Activated CD4-positive, alpha-beta T cell treated with anti-CD3 and anti-CD28 coated beads, Interleukin-2, amount 10 ng/mL, durations not matched to agents 24 days and 14 days (primary cell): ENCODE measurements at regions of chr19 and their contacts with region 1.

Region 1: DNA sequence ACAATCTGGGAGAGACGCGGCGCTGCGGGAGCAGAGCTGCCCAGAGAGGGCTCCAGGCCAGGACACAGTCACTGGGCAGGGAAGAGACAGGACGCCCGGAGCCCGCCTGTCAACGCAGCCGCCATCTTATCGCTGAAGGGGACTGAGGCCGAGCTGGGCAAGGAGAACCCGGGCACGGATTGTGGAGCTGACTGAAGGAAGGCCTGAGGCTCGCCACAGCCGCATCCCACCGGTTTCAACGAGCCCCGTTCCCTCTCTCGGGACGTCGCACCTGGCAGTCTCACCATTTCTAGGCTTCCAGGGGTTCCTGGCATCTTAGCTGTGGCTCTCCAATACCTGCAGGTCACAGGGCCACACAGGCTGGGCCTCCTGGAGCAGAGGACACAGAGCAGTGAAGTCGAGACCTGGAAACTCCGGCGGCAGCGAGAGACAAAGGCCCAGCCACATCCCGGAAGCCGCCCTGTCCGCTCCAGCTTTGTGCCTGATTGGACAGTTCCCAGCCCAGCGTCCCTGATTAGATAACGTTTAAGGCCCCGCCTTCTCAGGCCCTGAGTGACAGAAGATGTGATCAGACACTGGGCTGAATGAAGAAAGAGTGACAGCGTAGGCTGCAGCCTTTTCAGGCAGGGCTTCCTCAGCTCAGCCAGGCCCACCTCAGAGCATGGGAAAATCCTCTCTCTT is at the start of gene ZNF91:
- DNase-seq: peak; percentile 96
- H3K4me3 Mint-ChIP-seq: peak within 1 kb of the TSS; percentile 97
- H3K27ac Mint-ChIP-seq: peak within 1 kb of the TSS; percentile 98
- H3K4me1 Mint-ChIP-seq: no peaks in the 10 kb centered on the region
- H3K27me3 Mint-ChIP-seq: no peaks in the 10 kb centered on the region
- total RNA-seq, gene ZNF91: 25.0 and 31.1 TPM in 2 replicates

Region 2: DNA sequence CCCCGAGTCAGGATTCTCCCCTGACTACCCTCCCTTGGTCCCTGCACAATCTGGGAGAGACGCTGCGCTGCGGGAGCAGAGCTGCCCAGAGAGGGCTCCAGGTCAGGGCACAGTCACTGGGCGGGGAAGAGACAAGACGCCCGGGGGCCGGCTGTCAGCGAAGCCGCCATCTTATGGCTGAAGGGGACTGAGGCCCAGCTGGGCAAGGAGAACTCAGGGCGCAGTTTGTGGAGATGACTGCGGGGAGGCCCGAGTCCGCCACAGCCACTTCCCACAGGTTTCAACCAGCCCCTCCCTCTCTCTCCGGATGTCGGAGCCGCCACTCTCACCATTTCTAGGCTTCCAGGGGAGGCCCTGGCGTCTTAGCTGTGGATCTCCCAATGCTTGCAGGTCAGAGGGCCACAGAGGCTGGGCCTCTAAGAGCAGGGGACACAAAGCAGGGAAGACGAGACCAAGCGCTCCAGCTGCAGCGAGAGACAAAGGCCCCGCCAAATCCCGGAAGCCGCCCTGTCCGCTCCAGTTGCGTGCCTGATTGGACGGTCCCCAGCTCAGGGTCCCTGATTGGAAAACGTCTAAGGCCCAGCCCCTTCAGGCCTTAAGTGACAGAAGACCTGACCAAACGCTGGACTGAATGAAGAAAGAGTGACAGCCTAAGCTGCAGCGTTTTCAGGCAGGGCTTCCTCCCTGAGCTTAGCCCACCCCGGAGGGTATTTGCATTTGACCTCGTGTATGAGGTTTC is 145.1 kb before region 1 on chr19 and contains the start of gene ZNF724:
- intact Hi-C with region 1: loop called (anchors 1 kb)
- DNase-seq: peak; percentile 96
- H3K4me3 Mint-ChIP-seq: peak within 1 kb of the TSS; percentile 98
- H3K27ac Mint-ChIP-seq: peak within 1 kb of the TSS; percentile 98
- H3K4me1 Mint-ChIP-seq: peaks cover 7% of the 10 kb centered on the region
- H3K27me3 Mint-ChIP-seq: no peaks in the 10 kb centered on the region
- total RNA-seq, gene ZNF724: 15.5 and 16.1 TPM in 2 replicates

Region 3: DNA sequence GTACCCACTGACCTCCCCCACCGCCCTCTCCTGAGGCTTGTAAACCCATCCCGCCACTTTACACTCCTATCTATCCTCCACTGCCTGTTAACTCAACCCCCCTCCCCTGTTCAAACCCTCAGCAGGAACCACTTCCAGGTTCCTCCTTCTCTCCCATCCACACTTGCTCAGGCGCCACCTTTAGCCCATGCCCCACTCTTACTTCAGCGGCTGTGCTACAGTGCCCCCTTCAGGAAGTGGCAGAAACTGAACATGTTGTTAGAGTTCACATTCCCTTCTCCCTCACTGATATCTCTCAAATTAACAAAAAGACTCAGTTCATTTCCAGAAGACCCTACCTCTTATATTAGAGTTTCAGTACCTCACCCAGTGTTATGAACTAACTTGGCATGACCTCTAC is 49.3 kb before region 1 on chr19:
- intact Hi-C with region 1: no loop called
- DNase-seq: no peak
- H3K4me3 Mint-ChIP-seq: no peak overlapping the region
- H3K27ac Mint-ChIP-seq: no peak overlapping the region
- H3K4me1 Mint-ChIP-seq: no peaks in the 10 kb centered on the region
- H3K27me3 Mint-ChIP-seq: no peaks in the 10 kb centered on the region

Region 4: DNA sequence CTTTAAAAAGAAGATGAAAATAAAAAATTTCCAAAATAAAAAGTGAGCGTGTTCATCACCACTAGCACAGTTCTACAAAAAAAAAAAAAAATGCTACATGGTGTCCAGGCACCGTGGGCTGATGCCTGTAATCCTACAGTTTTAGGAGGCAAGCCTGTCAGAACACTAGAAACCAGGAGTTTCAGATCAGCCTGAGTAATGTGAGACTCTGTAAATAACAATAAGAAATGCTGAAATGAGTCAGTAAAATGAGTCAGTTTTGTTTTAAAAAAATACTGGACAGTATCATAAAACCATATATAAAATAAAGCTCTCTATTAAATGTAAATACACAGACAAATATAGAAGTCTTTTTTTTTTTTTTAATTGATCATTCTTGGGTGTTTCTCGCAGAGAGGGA is 30.0 kb before region 1 on chr19:
- intact Hi-C with region 1: no loop called
- DNase-seq: no peak
- H3K4me3 Mint-ChIP-seq: no peak overlapping the region
- H3K27ac Mint-ChIP-seq: no peak overlapping the region
- H3K4me1 Mint-ChIP-seq: no peaks in the 10 kb centered on the region
- H3K27me3 Mint-ChIP-seq: no peaks in the 10 kb centered on the region

Region 5: DNA sequence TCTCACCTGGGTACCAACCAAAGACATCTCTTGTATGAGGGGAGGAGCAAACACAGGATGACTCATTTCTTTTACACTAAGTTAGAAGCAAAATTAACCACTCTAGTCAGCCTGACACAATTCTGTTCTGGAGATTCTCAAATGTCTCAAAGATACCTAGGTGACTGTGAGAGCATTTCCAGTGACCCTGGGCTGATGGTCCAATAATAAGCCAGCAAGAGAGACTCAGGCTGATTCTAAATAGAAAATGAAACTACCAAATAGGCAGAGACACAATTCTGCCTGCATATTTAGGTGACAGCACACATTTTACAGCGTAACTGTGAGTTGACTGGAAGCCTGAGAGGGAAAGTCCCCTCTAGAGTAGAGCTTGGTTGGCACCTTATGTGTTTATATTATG is 16.2 kb before region 1 on chr19:
- intact Hi-C with region 1: no loop called
- DNase-seq: no peak
- H3K4me3 Mint-ChIP-seq: no peak overlapping the region
- H3K27ac Mint-ChIP-seq: no peak overlapping the region
- H3K4me1 Mint-ChIP-seq: peaks cover 2% of the 10 kb centered on the region
- H3K27me3 Mint-ChIP-seq: no peaks in the 10 kb centered on the region

Region 6: GRCh38 chr19:23491421-23491820 is 96.2 kb after region 1 on chr19:
- intact Hi-C with region 1: no loop called
- DNase-seq: no peak
- H3K4me3 Mint-ChIP-seq: no peak overlapping the region
- H3K27ac Mint-ChIP-seq: no peak overlapping the region
- H3K4me1 Mint-ChIP-seq: no peaks in the 10 kb centered on the region
- H3K27me3 Mint-ChIP-seq: no peaks in the 10 kb centered on the region

Region 7: GRCh38 chr19:23686621-23687423 is 291.6 kb after region 1 on chr19 and contains the start of gene ZNF675:
- intact Hi-C with region 1: loop called (anchors 5 kb)
- DNase-seq: peak; percentile 96
- H3K4me3 Mint-ChIP-seq: peak within 1 kb of the TSS; percentile 97
- H3K27ac Mint-ChIP-seq: peak within 1 kb of the TSS; percentile 99
- H3K4me1 Mint-ChIP-seq: peaks cover 10% of the 10 kb centered on the region
- H3K27me3 Mint-ChIP-seq: no peaks in the 10 kb centered on the region
- total RNA-seq, gene ZNF675: 17.0 and 17.3 TPM in 2 replicates